Activated T-helper 1 cell treated with anti-CD3 and anti-CD28 coated beads, Interleukin-12 subunit alpha, Interleukin-12 subunit beta, Interleukin-2, Interleukin-4 antibody, amounts not matched to agents 30 ng/mL and 10 ng/mL and 1 ng/mL, durations not matched to agents 14 hours and 24 hours and 36 hours (primary cell): ENCODE measurements at regions of chr18 and their contacts with region 1.

Region 1: DNA sequence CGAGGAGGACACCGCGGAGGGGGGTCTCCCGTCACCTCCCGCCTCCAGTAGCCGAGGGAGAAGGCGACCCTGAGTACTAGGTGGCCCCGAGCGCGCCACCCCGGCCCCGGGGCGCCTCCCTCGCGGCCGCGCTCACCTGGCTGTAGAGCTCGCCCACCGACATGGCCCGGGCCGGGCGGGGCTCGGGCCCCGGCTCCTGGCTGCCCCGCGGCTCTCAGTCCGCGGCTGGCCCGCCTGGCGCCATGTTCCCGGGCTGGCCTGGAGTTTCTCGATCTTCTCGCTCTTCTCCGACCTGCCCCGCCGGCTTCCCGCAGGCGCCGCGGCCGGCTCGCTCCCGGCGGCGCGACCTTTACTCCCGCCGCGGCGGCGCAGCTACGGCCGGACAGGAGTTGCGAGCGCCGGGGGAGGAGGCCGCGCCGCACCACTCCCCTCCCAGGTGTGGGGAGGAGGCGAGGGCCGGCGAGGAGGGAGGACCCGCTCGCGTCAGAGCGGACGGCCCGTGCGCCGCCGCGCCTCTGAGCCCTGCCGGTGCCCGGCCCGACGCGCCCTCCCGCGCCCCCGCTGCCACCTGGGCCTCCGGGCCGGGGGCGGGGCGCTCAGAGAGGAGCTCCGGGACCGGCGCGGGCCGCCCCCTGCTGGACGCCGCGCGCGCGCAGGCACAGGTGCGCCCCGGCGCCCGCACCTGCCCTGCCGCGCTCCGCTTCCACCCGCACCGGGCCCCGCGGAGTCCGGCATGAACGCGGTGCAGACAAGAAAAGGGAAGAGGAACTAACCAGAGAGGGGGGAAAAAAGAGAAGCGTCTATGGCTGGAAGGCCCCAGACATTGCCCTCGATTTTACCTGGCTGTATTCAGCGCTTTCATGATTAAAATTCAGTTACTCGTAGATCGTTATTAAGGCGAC is at the start of gene MYO5B:
- DNase-seq: peak; percentile 24
- H3K4me3 Mint-ChIP-seq: peak within 1 kb of the TSS; percentile 62
- H3K27ac Mint-ChIP-seq: no peak within 1 kb of the TSS
- H3K4me1 Mint-ChIP-seq: peaks cover 7% of the 10 kb centered on the region
- H3K27me3 Mint-ChIP-seq: peaks cover 62% of the 10 kb centered on the region
- total RNA-seq, gene MYO5B: 0.12 TPM in 1 of 2 replicates, not detected in the other

Region 2: GRCh38 chr18:49757513-49758262 is 437.2 kb before region 1 on chr18:
- intact Hi-C with region 1: no loop called
- DNase-seq: no peak
- H3K4me3 Mint-ChIP-seq: no peak overlapping the region
- H3K27ac Mint-ChIP-seq: peak overlapping the region; percentile 11
- H3K4me1 Mint-ChIP-seq: no peaks in the 10 kb centered on the region
- H3K27me3 Mint-ChIP-seq: peaks cover 16% of the 10 kb centered on the region

Region 3: GRCh38 chr18:50009773-50010335 is 185.0 kb before region 1 on chr18:
- intact Hi-C with region 1: loop called (anchors 1 kb)
- DNase-seq: peak; percentile 16
- H3K4me3 Mint-ChIP-seq: no peak overlapping the region
- H3K27ac Mint-ChIP-seq: no peak overlapping the region
- H3K4me1 Mint-ChIP-seq: no peaks in the 10 kb centered on the region
- H3K27me3 Mint-ChIP-seq: peaks cover under 1% of the 10 kb centered on the region

Region 4: GRCh38 chr18:50356036-50356945 is 161.4 kb after region 1 on chr18:
- intact Hi-C with region 1: no loop called
- DNase-seq: no peak
- H3K4me3 Mint-ChIP-seq: no peak overlapping the region
- H3K27ac Mint-ChIP-seq: peak overlapping the region; percentile 27
- H3K4me1 Mint-ChIP-seq: peaks cover 14% of the 10 kb centered on the region
- H3K27me3 Mint-ChIP-seq: peaks cover 25% of the 10 kb centered on the region